Activated CD8-positive, alpha-beta T cell treated with anti-CD3 and anti-CD28 coated beads, Interleukin-2, amount 10 ng/mL, durations not matched to agents 7 days and 5 days (primary cell): ENCODE measurements at regions of chr6 and their contacts with region 1.

Region 1: DNA sequence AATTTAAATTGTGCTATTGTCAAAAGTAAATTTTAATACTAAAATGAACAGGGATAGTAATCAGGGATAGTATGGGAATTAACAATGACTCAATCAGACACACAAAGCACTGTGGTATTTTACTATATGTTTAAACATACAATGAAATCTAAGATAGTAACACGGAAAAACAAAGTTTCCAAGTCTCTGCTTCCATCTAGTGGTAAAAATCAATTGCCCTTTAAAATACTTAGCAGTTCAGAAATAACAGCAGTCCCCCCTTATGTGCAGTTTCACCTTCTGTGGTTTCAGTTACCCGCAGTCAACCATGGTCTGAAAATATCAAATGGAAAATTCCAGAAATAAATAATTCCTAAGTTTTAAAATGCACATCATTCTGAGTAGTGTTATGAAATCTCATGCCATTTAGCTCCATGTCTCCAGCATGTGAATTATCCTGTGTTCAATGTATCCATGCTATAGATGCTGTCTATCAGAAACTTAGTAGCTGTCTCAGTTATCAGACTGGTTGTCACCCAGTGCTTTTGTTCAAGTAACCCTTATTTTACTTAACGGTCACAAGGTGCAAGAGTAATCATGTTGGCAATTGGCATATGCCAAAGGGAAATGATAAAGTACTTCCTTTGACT is 58.5 kb downstream of the AHI1 start:
- DNase-seq: no peak
- ATAC-seq: peak; percentile 60
- H3K4me3 Mint-ChIP-seq: no peak overlapping the region
- H3K27ac Mint-ChIP-seq: no peak overlapping the region
- H3K4me1 Mint-ChIP-seq: peaks cover 21% of the 10 kb centered on the region
- H3K27me3 Mint-ChIP-seq: no peaks in the 10 kb centered on the region

Region 2: GRCh38 chr6:135423649-135424128 is 15.3 kb before region 1 on chr6:
- CTCF ChIA-PET with region 1: interaction called, 17 read pairs
- POLR2A ChIA-PET with region 1: no interaction called
- DNase-seq: no peak
- ATAC-seq: peak; percentile 79
- H3K4me3 Mint-ChIP-seq: no peak overlapping the region
- H3K27ac Mint-ChIP-seq: no peak overlapping the region
- H3K4me1 Mint-ChIP-seq: peaks cover 7% of the 10 kb centered on the region
- H3K27me3 Mint-ChIP-seq: no peaks in the 10 kb centered on the region